ENCODE measurements at regions of chr10 and their contacts with region 1.

Region 1: DNA sequence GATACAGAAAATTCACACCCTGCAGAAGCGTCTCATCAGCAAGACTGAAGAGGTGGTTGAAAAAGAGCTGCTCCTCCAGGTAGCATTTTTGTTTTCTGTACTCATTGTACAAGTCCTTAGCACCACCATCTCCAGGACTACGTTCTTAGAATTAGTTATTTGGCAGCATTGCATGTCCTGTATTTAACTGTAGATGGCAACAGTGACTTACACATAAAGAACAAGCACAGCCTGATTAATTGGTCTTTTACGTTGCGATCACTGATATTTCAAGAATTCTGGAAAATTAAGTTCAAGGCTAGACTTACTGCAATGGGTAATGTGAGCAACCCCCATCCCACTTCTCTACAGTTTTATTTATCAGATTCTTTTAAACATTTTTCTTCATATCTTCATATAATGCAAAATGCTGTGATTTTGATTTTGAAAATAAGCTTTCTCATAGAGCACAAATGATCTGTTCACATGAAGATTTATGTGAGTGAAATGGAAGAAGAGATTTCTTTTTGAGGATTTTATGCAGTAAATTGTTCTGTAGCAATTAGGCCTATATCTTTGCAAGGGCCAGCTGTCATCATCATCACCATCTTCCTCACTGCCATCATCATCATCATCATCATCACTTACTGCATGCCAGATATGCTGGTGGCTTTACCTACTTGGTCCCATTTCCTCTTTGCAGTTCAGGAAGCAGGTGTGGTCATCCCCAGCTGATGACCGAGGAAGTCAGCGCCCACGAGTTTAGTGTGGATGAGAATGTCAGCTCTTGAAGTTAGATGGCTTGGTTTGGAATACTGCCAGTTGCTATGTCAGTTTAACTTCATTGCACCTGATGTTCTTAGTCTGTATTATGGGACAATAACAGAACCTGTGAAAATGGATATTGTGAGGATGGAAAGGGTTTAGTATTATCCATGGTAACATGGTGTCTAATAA is 53.4 kb downstream of the CFAP58 start:
- DNase-seq: peak; percentile 11
- H3K4me3 ChIP-seq: no peak overlapping the region
- H3K27ac ChIP-seq: no peak overlapping the region
- H3K4me1 ChIP-seq: no peaks in the 10 kb centered on the region
- H3K27me3 ChIP-seq: no peaks in the 10 kb centered on the region
- CTCF ChIP-seq: no peak
- POLR2A ChIP-seq: no peak

Region 2: DNA sequence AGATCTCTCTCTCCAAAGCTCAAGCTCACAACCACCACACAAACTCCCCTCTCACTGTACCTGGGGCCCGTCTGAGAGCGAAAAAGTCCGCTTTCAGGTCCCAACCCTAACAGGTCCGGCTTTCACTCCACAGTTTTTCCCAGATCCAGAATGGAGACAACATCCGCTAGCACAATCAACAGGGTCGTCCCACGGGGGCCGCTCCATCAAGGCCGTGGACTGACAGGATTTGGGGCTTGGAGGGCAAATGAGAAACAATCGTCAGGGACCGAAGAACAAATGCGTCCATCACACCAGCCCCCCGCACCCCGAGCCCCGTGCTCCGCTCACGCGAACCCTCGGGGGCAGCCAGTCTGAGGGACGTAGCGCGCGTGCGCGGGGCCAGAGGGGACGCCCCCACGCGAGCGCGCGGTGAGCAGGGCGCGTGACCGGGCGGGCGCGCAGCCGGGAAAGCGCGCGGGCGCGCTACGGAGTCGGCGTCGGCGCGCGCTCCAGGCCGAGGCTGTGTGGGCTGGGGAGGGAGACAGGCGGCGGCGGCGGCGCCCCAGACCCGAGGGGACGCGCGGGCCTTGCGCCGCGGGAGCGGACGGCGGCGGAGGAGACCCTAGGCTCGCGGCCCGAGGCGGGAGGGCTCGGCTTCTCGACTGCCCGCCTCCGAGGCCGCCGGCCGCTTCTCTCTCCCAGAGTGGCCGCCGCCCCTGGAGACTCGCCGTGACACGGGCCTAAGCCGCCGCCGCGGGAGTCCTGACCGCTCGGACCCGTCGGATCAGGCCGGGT is 440.1 kb before region 1 on chr10 and contains the start of gene SLK:
- CTCF ChIA-PET with region 1: no interaction called
- POLR2A ChIA-PET with region 1: no interaction called
- dilution Hi-C with region 1: no loop called
- intact Hi-C with region 1: no loop called
- DNase-seq: peak; percentile 86
- H3K4me3 ChIP-seq: peak within 1 kb of the TSS; percentile 81 to 99 (median 97)
- H3K27ac ChIP-seq: peak within 1 kb of the TSS; percentile 73
- H3K4me1 ChIP-seq: peaks cover 26% of the 10 kb centered on the region
- H3K27me3 ChIP-seq: no peaks in the 10 kb centered on the region
- CTCF ChIP-seq: no peak
- POLR2A ChIP-seq: peak; percentile 83
- total RNA-seq, gene SLK: 31.8 and 36.0 TPM in 2 replicates

Region 3: GRCh38 chr10:104220522-104220921 is 186.5 kb before region 1 on chr10:
- CTCF ChIA-PET with region 1: no interaction called
- POLR2A ChIA-PET with region 1: no interaction called
- dilution Hi-C with region 1: no loop called
- intact Hi-C with region 1: no loop called
- DNase-seq: no peak
- H3K4me3 ChIP-seq: no peak overlapping the region
- H3K27ac ChIP-seq: no peak overlapping the region
- H3K4me1 ChIP-seq: no peaks in the 10 kb centered on the region
- H3K27me3 ChIP-seq: peaks cover 5 to 12% of the 10 kb centered on the region in 2 experiments
- CTCF ChIP-seq: no peak
- POLR2A ChIP-seq: no peak

Region 4: DNA sequence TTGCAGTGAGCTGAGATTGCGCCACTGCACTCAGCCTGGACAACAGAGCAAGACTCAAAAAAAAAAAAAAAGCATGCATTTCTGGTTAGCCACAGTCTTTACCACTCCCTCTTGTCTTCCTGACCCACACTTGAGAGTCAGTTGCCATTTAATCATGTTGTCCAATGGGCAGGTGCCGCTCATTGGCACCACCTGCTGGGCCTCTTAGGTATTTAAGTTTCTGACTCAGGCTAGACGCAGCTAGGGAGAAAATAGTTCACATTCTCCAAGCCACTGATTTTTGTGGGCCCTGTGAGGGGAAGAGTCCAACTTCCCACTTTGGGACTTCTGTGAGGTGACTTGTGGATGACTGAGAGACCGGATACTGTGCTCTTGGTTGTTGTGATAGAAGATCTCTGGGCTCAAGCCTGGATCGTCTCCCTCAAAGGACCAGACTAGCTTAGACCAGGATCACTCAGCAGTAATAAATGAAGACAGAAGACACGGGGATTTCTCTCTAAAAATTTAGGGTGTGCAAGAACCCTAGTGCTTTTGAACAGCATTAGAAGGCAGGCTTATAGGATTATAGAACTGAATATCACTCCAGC is 207.4 kb after region 1 on chr10:
- CTCF ChIA-PET with region 1: no interaction called
- POLR2A ChIA-PET with region 1: no interaction called
- dilution Hi-C with region 1: no loop called
- intact Hi-C with region 1: loop called (anchors 5 kb)
- DNase-seq: no peak
- H3K4me3 ChIP-seq: no peak overlapping the region
- H3K27ac ChIP-seq: no peak overlapping the region
- H3K4me1 ChIP-seq: no peaks in the 10 kb centered on the region
- H3K27me3 ChIP-seq: no peaks in the 10 kb centered on the region
- CTCF ChIP-seq: peak; percentile 23 to 26
- POLR2A ChIP-seq: no peak

Measured in endothelial cell of umbilical vein (primary cell).